Colonic mucosa (tissue), 4 donors: ENCODE measurements at regions of chr1 and their contacts with region 1.

Region 1: GRCh38 chr1:240967070-240967724 is 355.2 kb upstream of the GREM2 start:
- DNase-seq: no peak
- H3K4me3 ChIP-seq: no peak overlapping the region
- H3K27ac ChIP-seq: no peak overlapping the region
- H3K4me1 ChIP-seq: no peaks in the 10 kb centered on the region
- H3K27me3 ChIP-seq: no peaks in the 10 kb centered on the region
- CTCF ChIP-seq: no peak

Region 2: GRCh38 chr1:240866724-240867123 is 100.5 kb before region 1 on chr1:
- intact Hi-C with region 1: no loop called
- DNase-seq: no peak
- H3K4me3 ChIP-seq: no peak overlapping the region
- H3K27ac ChIP-seq: no peak overlapping the region
- H3K4me1 ChIP-seq: no peaks in the 10 kb centered on the region
- H3K27me3 ChIP-seq: no peaks in the 10 kb centered on the region
- CTCF ChIP-seq: no peak

Region 3: DNA sequence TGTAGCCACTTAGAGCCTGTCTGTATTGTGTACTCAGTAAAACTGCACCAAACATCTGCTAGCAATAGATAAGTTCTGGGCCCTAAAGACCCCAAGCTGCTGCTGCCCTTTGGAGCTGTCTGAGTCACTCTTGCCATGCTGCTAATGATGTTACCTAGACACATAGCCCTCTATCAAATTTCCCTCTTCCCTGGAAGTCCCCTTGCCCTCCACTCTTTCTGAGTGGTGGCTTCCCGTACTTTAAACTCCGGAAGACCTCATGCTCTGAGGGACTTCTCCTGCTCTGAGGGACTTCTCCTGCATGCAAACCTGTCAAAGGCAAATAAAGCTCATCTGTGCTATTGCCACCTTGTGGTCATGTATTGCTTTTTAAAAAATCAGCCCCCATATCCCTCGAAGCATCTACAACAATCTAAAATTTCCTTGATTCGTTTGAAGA is 518.4 kb after region 1 on chr1:
- intact Hi-C with region 1: loop called (anchors 10 kb)
- DNase-seq: no peak
- H3K4me3 ChIP-seq: no peak overlapping the region
- H3K27ac ChIP-seq: no peak overlapping the region
- H3K4me1 ChIP-seq: no peaks in the 10 kb centered on the region
- H3K27me3 ChIP-seq: no peaks in the 10 kb centered on the region
- CTCF ChIP-seq: peak; percentile 15